ENCODE measurements at regions of chr1 and their contacts with region 1.

Region 1: GRCh38 chr1:27124405-27124804 is 30.5 kb downstream of the SLC9A1 start:
- DNase-seq: no peak
- H3K4me3 ChIP-seq: no peak overlapping the region
- H3K4me3 Mint-ChIP-seq: no peak overlapping the region
- H3K27ac Mint-ChIP-seq: no peak overlapping the region
- H3K4me1 ChIP-seq: no peaks in the 10 kb centered on the region
- H3K4me1 Mint-ChIP-seq: no peaks in the 10 kb centered on the region
- H3K27me3 ChIP-seq: no peaks in the 10 kb centered on the region
- H3K27me3 Mint-ChIP-seq: no peaks in the 10 kb centered on the region
- CTCF ChIP-seq: no peak

Region 2: GRCh38 chr1:27111626-27112573 is 12.5 kb before region 1 on chr1:
- CTCF ChIA-PET with region 1: no interaction called
- POLR2A ChIA-PET with region 1: no interaction called
- intact Hi-C with region 1: loop called (anchors 1 kb)
- DNase-seq: peak; percentile 29 to 51
- H3K4me3 ChIP-seq: no peak overlapping the region
- H3K4me3 Mint-ChIP-seq: no peak overlapping the region
- H3K27ac Mint-ChIP-seq: no peak overlapping the region
- H3K4me1 ChIP-seq: peaks cover 3% of the 10 kb centered on the region; the same call in 1 of the 2 replicates
- H3K4me1 Mint-ChIP-seq: no peaks in the 10 kb centered on the region
- H3K27me3 ChIP-seq: no peaks in the 10 kb centered on the region
- H3K27me3 Mint-ChIP-seq: no peaks in the 10 kb centered on the region
- CTCF ChIP-seq: no peak

Measured in Caco-2 (cell line).